ENCODE measurements at regions of chr7 and their contacts with region 1.

Region 1: GRCh38 chr7:158885624-158886023 is 29.3 kb downstream of the DYNC2I1 start:
- DNase-seq: no peak
- ATAC-seq: no peak
- H3K4me3 ChIP-seq: no peak overlapping the region
- H3K27ac ChIP-seq: peak overlapping the region in 1 of 10 donors; percentile 25
- H3K4me1 ChIP-seq: peaks cover 0 to 6% (median 0%) of the 10 kb centered on the region in 9 donors
- H3K27me3 ChIP-seq: no peaks in the 10 kb centered on the region
- CTCF ChIP-seq: peak in 7 of 9 donors; percentile 40 to 59 (median 44)

Region 2: GRCh38 chr7:158394936-158395335 is 490.7 kb before region 1 on chr7:
- intact Hi-C with region 1: no loop called
- DNase-seq: peak in 1 of 2 donors; percentile 27
- ATAC-seq: no peak
- H3K4me3 ChIP-seq: no peak overlapping the region
- H3K27ac ChIP-seq: no peak overlapping the region
- H3K4me1 ChIP-seq: no peaks in the 10 kb centered on the region
- H3K27me3 ChIP-seq: peaks cover 0 to 25% (median 9%) of the 10 kb centered on the region in 7 donors
- CTCF ChIP-seq: peak; percentile 35 to 67 (median 63)

Region 3: DNA sequence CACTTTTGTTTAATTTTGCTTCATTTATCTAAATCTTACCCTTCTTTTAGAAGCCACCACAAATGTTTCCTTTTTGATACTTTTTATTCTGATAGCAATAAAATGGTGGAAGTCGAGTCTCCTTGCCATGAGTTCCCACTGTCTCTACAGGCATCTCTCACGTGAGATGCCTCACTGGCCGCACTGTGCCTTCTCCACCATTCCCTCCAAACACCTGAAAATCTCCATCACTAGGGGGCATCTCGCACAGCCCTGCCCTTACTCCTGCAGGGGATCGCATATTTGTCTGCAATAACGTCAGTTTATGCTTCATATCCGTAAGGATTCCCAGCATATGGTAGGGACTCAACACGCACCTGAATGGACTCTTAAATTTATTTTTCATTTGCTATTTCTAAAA is 124.7 kb before region 1 on chr7:
- intact Hi-C with region 1: loop called in 1 of 10 experiments (anchors 10 kb)
- DNase-seq: no peak
- ATAC-seq: no peak
- H3K4me3 ChIP-seq: no peak overlapping the region
- H3K27ac ChIP-seq: no peak overlapping the region
- H3K4me1 ChIP-seq: peaks cover 0 to 10% (median 0%) of the 10 kb centered on the region in 9 donors
- H3K27me3 ChIP-seq: no peaks in the 10 kb centered on the region
- CTCF ChIP-seq: no peak

Measured in heart right ventricle (tissue), 16 donors.